ENCODE measurements at regions of chr19 and their contacts with region 1.

Region 1: GRCh38 chr19:45178262-45179071 is at the start of gene BLOC1S3:
- DNase-seq: peak; percentile 100
- H3K4me3 Mint-ChIP-seq: peak within 1 kb of the TSS; percentile 80
- H3K27ac Mint-ChIP-seq: peak within 1 kb of the TSS; percentile 86
- H3K4me1 Mint-ChIP-seq: peaks cover 44% of the 10 kb centered on the region
- H3K27me3 Mint-ChIP-seq: no peaks in the 10 kb centered on the region
- total RNA-seq, gene BLOC1S3: 5.1 to 6.5 TPM

Region 2: DNA sequence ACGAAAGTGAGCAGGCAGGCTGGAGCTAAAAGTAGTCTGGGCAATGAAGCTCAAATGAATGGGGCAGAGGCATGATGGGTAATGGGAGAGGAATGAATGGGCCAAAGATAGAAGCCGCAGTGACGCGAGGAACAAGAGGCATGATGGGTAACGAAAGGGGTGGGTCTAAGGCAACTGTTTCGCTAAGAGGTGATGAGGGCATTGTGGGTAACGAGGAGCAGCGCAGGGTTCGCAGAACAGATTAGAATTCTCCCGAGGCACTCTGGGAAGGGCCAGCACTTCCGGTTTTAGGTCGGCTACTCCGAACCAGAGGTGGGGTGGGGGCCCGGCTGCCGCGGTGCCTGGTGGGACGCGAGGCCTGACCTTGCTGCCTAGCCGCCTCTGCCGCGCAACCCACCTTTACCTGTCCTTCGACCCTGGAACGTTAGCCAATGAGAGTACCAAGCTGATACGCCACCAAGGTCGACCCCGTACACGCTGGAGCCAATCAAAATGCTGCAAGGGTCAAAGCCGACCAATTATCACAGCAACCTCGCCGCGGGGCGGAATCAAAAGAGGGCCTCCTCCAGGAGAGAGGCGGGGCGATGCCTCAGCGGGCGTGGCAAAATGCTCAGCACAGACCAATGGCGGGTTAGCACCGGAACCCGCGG is 288.0 kb before region 1 on chr19:
- CTCF ChIA-PET with region 1: no interaction called
- intact Hi-C with region 1: loop called (anchors 1 kb)
- DNase-seq: peak; percentile 100
- H3K4me3 Mint-ChIP-seq: peak overlapping the region; percentile 85
- H3K27ac Mint-ChIP-seq: peak overlapping the region; percentile 94
- H3K4me1 Mint-ChIP-seq: peaks cover 37% of the 10 kb centered on the region
- H3K27me3 Mint-ChIP-seq: no peaks in the 10 kb centered on the region

Region 3: GRCh38 chr19:45001087-45001739 is 177.3 kb before region 1 on chr19 and contains the start of gene RELB:
- CTCF ChIA-PET with region 1: interaction called, 3 read pairs
- intact Hi-C with region 1: loop called (anchors 1 kb)
- DNase-seq: peak; percentile 95
- H3K4me3 Mint-ChIP-seq: peak within 1 kb of the TSS; percentile 95
- H3K27ac Mint-ChIP-seq: peak within 1 kb of the TSS; percentile 98
- H3K4me1 Mint-ChIP-seq: peaks cover 17% of the 10 kb centered on the region
- H3K27me3 Mint-ChIP-seq: no peaks in the 10 kb centered on the region
- total RNA-seq, gene RELB: 55.4 to 57.3 TPM

Region 4: GRCh38 chr19:45092747-45093678 is 85.5 kb before region 1 on chr19 and contains the start of gene PPP1R37:
- CTCF ChIA-PET with region 1: no interaction called
- intact Hi-C with region 1: loop called (anchors 1 kb)
- DNase-seq: peak; percentile 95
- H3K4me3 Mint-ChIP-seq: peak within 1 kb of the TSS; percentile 93
- H3K27ac Mint-ChIP-seq: peak within 1 kb of the TSS; percentile 98
- H3K4me1 Mint-ChIP-seq: peaks cover 50% of the 10 kb centered on the region
- H3K27me3 Mint-ChIP-seq: no peaks in the 10 kb centered on the region
- total RNA-seq, gene PPP1R37: 10.2 to 10.3 TPM

Region 5: GRCh38 chr19:45103156-45103507 is 75.3 kb before region 1 on chr19:
- CTCF ChIA-PET with region 1: no interaction called
- intact Hi-C with region 1: no loop called
- DNase-seq: peak; percentile 63
- H3K4me3 Mint-ChIP-seq: peak overlapping the region; percentile 14
- H3K27ac Mint-ChIP-seq: no peak overlapping the region
- H3K4me1 Mint-ChIP-seq: peaks cover 49% of the 10 kb centered on the region
- H3K27me3 Mint-ChIP-seq: no peaks in the 10 kb centered on the region

Region 6: DNA sequence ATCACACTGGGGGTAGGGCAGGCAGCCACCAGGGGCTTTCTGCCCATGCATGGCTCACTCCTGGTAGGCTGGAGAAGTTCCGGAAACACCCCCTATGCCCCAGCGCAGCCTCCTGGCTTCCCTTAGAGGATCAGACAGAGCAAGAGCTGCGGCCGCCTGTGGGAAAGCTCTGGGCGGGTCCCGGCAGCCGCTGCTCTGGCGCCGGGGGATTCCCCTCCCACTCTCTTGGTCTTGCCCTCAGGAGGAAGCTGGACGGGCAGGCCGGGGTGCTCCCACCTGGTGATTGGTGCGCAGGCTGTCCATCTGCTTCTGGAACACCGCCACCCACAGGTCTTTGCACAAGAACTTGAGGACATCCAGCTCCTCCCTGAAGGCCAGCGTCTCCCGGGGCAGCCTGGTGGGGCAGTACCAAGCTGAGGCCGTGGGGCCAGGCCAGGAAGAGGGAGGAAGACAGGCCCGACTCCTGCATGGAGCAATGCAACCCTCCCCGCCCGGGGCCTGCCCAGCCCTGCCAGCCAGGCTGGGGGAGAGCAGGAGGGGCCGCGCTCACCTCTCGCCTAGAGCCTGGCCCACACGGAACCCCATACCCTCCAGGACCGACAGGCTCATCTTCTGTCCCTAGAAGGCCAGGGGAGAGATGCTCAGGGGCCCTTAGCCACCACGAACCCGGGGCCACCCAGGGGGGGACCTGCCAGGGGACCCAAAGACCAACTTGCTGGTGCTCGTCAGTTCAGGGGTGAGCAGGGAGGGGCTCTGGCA is 13.7 kb before region 1 on chr19:
- CTCF ChIA-PET with region 1: interaction called, 3 read pairs
- intact Hi-C with region 1: loop called (anchors 1 kb)
- DNase-seq: peak; percentile 92
- H3K4me3 Mint-ChIP-seq: no peak overlapping the region
- H3K27ac Mint-ChIP-seq: no peak overlapping the region
- H3K4me1 Mint-ChIP-seq: peaks cover 16% of the 10 kb centered on the region
- H3K27me3 Mint-ChIP-seq: no peaks in the 10 kb centered on the region

Region 7: GRCh38 chr19:45370410-45371204 is 192.1 kb after region 1 on chr19 and contains the start of gene ERCC2:
- CTCF ChIA-PET with region 1: no interaction called
- intact Hi-C with region 1: loop called (anchors 1 kb)
- DNase-seq: peak; percentile 100
- H3K4me3 Mint-ChIP-seq: peak within 1 kb of the TSS; percentile 93
- H3K27ac Mint-ChIP-seq: peak within 1 kb of the TSS; percentile 91
- H3K4me1 Mint-ChIP-seq: peaks cover 5% of the 10 kb centered on the region
- H3K27me3 Mint-ChIP-seq: no peaks in the 10 kb centered on the region
- total RNA-seq, gene ERCC2: 20.6 to 22.9 TPM

Region 8: GRCh38 chr19:45409557-45409920 is 231.1 kb after region 1 on chr19:
- CTCF ChIA-PET with region 1: no interaction called
- intact Hi-C with region 1: no loop called
- DNase-seq: no peak
- H3K4me3 Mint-ChIP-seq: no peak overlapping the region
- H3K27ac Mint-ChIP-seq: no peak overlapping the region
- H3K4me1 Mint-ChIP-seq: peaks cover 32% of the 10 kb centered on the region
- H3K27me3 Mint-ChIP-seq: peaks cover 5% of the 10 kb centered on the region

Measured in activated naive CD4-positive, alpha-beta T cell treated with anti-CD3 and anti-CD28 coated beads for 36 hours (primary cell).